Activated CD8-positive, alpha-beta T cell treated with anti-CD3 and anti-CD28 coated beads for 36 hours (primary cell): ENCODE measurements at regions of chr4 and their contacts with region 1.

Region 1: DNA sequence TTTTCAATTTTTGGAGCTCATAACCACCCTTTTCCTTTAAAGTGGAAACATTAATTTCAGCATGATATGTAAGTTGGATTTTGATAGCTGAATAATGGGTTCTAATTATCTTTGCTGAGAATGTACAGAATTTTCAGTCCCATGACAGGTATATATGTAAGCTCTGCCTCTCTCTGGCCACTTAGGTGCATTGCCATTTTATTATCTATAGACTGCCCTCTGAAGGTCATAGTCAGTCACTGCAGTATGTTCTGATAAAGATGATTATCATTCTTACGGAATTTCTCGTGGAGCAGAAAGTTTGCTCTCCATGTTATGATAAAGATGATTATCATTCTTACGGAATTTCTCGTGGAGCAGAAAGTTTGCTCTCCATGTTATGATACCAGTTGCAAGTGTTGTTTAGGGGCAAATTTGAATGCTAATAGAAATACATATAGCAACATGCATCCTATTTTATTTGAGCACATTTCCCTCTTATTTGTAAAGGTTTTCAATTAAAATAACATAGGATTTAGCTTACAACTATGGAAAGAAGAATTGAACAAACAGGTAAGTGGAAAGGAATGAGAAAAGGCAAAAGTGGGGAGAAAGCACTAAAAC is 10.4 kb downstream of the AFP start:
- DNase-seq: peak; percentile 13
- ATAC-seq: peak; percentile 93
- H3K4me3 Mint-ChIP-seq: no peak overlapping the region
- H3K27ac Mint-ChIP-seq: no peak overlapping the region
- H3K4me1 Mint-ChIP-seq: no peaks in the 10 kb centered on the region
- H3K27me3 Mint-ChIP-seq: peaks cover 6% of the 10 kb centered on the region
- CTCF ChIP-seq: peak; percentile 85

Region 2: GRCh38 chr4:73311428-73311827 is 135.0 kb before region 1 on chr4:
- CTCF ChIA-PET with region 1: interaction called, 32 read pairs
- POLR2A ChIA-PET with region 1: no interaction called
- intact Hi-C with region 1: loop called (anchors 5 kb)
- DNase-seq: no peak
- ATAC-seq: no peak
- H3K4me3 Mint-ChIP-seq: no peak overlapping the region
- H3K27ac Mint-ChIP-seq: no peak overlapping the region
- H3K4me1 Mint-ChIP-seq: no peaks in the 10 kb centered on the region
- H3K27me3 Mint-ChIP-seq: no peaks in the 10 kb centered on the region
- CTCF ChIP-seq: peak; percentile 66

Region 3: GRCh38 chr4:73341454-73341853 is 105.0 kb before region 1 on chr4:
- CTCF ChIA-PET with region 1: interaction called, 21 read pairs
- POLR2A ChIA-PET with region 1: no interaction called
- intact Hi-C with region 1: no loop called
- DNase-seq: peak; percentile 17
- ATAC-seq: no peak
- H3K4me3 Mint-ChIP-seq: no peak overlapping the region
- H3K27ac Mint-ChIP-seq: no peak overlapping the region
- H3K4me1 Mint-ChIP-seq: no peaks in the 10 kb centered on the region
- H3K27me3 Mint-ChIP-seq: no peaks in the 10 kb centered on the region
- CTCF ChIP-seq: peak; percentile 40

Region 4: DNA sequence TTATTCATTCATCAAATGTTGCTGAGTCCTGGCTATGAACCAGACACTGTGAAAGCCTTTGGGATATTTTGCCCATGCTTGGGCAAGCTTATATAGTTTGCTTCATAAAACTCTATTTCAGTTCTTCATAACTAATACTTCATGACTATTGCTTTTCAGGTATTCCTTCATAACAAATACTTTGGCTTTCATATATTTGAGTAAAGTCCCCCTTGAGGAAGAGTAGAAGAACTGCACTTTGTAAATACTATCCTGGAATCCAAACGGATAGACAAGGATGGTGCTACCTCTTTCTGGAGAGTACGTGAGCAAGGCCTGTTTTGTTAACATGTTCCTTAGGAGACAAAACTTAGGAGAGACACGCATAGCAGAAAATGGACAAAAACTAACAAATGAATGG is 12.1 kb before region 1 on chr4:
- CTCF ChIA-PET with region 1: interaction called, 39 read pairs
- POLR2A ChIA-PET with region 1: no interaction called
- intact Hi-C with region 1: no loop called
- DNase-seq: no peak
- ATAC-seq: no peak
- H3K4me3 Mint-ChIP-seq: no peak overlapping the region
- H3K27ac Mint-ChIP-seq: no peak overlapping the region
- H3K4me1 Mint-ChIP-seq: no peaks in the 10 kb centered on the region
- H3K27me3 Mint-ChIP-seq: peaks cover 2% of the 10 kb centered on the region
- CTCF ChIP-seq: peak; percentile 24

Region 5: GRCh38 chr4:73458184-73459047 is 12.0 kb after region 1 on chr4:
- CTCF ChIA-PET with region 1: interaction called, 18 read pairs
- POLR2A ChIA-PET with region 1: no interaction called
- intact Hi-C with region 1: no loop called
- DNase-seq: no peak
- ATAC-seq: no peak
- H3K4me3 Mint-ChIP-seq: no peak overlapping the region
- H3K27ac Mint-ChIP-seq: no peak overlapping the region
- H3K4me1 Mint-ChIP-seq: no peaks in the 10 kb centered on the region
- H3K27me3 Mint-ChIP-seq: no peaks in the 10 kb centered on the region
- CTCF ChIP-seq: no peak

Region 6: DNA sequence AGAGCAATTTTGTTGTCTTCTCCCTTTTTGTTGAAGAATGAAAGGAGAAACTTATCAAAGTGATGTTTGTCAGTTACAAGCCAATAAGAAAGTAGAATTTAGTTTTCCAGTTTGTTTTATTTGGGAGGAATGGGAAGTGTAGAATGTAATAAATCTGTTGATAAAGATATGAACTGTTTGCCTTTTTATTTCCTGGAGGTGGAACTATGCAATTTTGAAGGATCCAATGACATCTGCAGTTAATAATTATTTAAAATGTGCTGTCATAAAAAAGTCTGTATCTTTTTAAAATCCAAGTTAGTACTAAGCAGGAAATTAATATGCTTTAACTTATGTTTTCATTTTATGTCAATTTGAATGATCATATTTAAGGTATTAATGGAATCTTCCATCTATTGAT is 490.5 kb after region 1 on chr4:
- CTCF ChIA-PET with region 1: no interaction called
- POLR2A ChIA-PET with region 1: no interaction called
- intact Hi-C with region 1: no loop called
- DNase-seq: no peak
- ATAC-seq: no peak
- H3K4me3 Mint-ChIP-seq: no peak overlapping the region
- H3K27ac Mint-ChIP-seq: no peak overlapping the region
- H3K4me1 Mint-ChIP-seq: no peaks in the 10 kb centered on the region
- H3K27me3 Mint-ChIP-seq: no peaks in the 10 kb centered on the region
- CTCF ChIP-seq: no peak